PC-9 (cell line): ENCODE measurements at regions of chr7 and their contacts with region 1.

Region 1: GRCh38 chr7:19958309-19958896 is 185.0 kb upstream of the TMEM196 start:
- DNase-seq: peak; percentile 70 to 100
- H3K4me3 ChIP-seq: peak overlapping the region; percentile 3; the same call in 1 of the 2 replicates
- H3K27ac ChIP-seq: peak overlapping the region; percentile 88
- H3K4me1 ChIP-seq: peaks cover 32% of the 10 kb centered on the region
- H3K27me3 ChIP-seq: no peaks in the 10 kb centered on the region
- CTCF ChIP-seq: no peak; the same call in 1 of the 2 replicates

Region 2: DNA sequence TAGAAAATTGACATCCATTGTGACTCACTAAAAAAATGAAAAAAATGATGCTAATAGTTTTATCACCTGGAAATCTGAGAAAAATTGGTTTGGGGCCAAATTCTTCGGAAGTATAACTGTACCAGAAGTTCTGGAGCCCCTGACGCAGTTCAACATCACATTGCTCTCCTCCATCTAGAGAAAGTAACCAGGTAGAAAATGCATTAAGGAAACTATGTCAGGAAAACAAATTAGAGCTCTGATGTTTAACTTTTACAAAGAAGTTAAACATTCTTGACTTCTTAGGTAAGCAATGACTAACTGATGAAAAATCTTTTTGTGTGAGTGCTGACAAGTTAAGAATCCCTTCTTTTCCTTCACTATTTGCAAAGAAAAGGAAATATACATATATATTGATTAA is 123.8 kb before region 1 on chr7:
- CTCF ChIA-PET with region 1: no interaction called
- POLR2A ChIA-PET with region 1: interaction called, 6 read pairs
- intact Hi-C with region 1: loop called (anchors 2 kb)
- DNase-seq: peak; percentile 34 to 56
- H3K4me3 ChIP-seq: no peak overlapping the region
- H3K27ac ChIP-seq: no peak overlapping the region
- H3K4me1 ChIP-seq: no peaks in the 10 kb centered on the region; the same call in 1 of the 2 replicates
- H3K27me3 ChIP-seq: no peaks in the 10 kb centered on the region
- CTCF ChIP-seq: no peak

Region 3: GRCh38 chr7:19969859-19970498 is 11.6 kb after region 1 on chr7:
- CTCF ChIA-PET with region 1: interaction called, 5 read pairs
- POLR2A ChIA-PET with region 1: no interaction called
- intact Hi-C with region 1: loop called (anchors 1 kb)
- DNase-seq: peak; percentile 20 to 87
- H3K4me3 ChIP-seq: peak overlapping the region; percentile 7; the same call in 1 of the 2 replicates
- H3K27ac ChIP-seq: peak overlapping the region; percentile 48
- H3K4me1 ChIP-seq: peaks cover 28% of the 10 kb centered on the region
- H3K27me3 ChIP-seq: no peaks in the 10 kb centered on the region
- CTCF ChIP-seq: no peak

Region 4: GRCh38 chr7:20199015-20199737 is 240.8 kb after region 1 on chr7:
- CTCF ChIA-PET with region 1: no interaction called
- POLR2A ChIA-PET with region 1: no interaction called
- intact Hi-C with region 1: loop called (anchors 1 kb)
- DNase-seq: peak; percentile 89 to 91
- H3K4me3 ChIP-seq: no peak overlapping the region
- H3K27ac ChIP-seq: peak overlapping the region; percentile 65
- H3K4me1 ChIP-seq: peaks cover 24% of the 10 kb centered on the region
- H3K27me3 ChIP-seq: no peaks in the 10 kb centered on the region
- CTCF ChIP-seq: no peak

Region 5: GRCh38 chr7:20310963-20311742 is 352.8 kb after region 1 on chr7:
- CTCF ChIA-PET with region 1: no interaction called
- POLR2A ChIA-PET with region 1: no interaction called
- intact Hi-C with region 1: loop called (anchors 1 kb)
- DNase-seq: peak in 1 of 2 experiments; percentile 56
- H3K4me3 ChIP-seq: no peak overlapping the region
- H3K27ac ChIP-seq: no peak overlapping the region
- H3K4me1 ChIP-seq: no peaks in the 10 kb centered on the region
- H3K27me3 ChIP-seq: no peaks in the 10 kb centered on the region
- CTCF ChIP-seq: peak; percentile 92